Activated naive CD4-positive, alpha-beta T cell treated with anti-CD3 and anti-CD28 coated beads for 36 hours (primary cell): ENCODE measurements at regions of chr3 and their contacts with region 1.

Region 1: GRCh38 chr3:177057768-177058167 is 139.5 kb downstream of the TBL1XR1 start:
- DNase-seq: peak; percentile 84
- H3K4me3 Mint-ChIP-seq: no peak overlapping the region
- H3K27ac Mint-ChIP-seq: no peak overlapping the region
- H3K4me1 Mint-ChIP-seq: peaks cover 32% of the 10 kb centered on the region
- H3K27me3 Mint-ChIP-seq: no peaks in the 10 kb centered on the region

Region 2: GRCh38 chr3:175238801-175239200 is 1819.0 kb before region 1 on chr3:
- CTCF ChIA-PET with region 1: no interaction called
- intact Hi-C with region 1: no loop called
- DNase-seq: no peak
- H3K4me3 Mint-ChIP-seq: no peak overlapping the region
- H3K27ac Mint-ChIP-seq: no peak overlapping the region
- H3K4me1 Mint-ChIP-seq: no peaks in the 10 kb centered on the region
- H3K27me3 Mint-ChIP-seq: no peaks in the 10 kb centered on the region

Region 3: DNA sequence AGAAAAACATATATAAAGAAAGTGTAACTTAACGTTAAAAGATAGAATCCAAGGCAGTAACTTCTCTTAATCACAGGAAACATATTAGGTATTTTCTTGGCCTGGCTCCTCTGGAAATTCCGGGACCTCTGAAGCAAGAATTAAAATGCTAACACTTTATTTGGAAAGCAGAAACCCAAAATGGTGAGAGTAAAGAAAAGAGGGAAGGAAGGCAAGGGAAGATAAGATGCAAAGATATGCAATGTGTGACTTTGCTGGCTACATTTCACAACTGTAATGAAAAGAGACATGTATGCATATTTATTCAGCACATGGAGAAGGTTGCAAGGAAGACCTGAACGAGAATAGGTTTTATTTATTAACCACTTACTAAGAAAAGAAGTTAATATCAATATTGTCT is 233.0 kb before region 1 on chr3:
- CTCF ChIA-PET with region 1: no interaction called
- intact Hi-C with region 1: no loop called
- DNase-seq: no peak
- H3K4me3 Mint-ChIP-seq: no peak overlapping the region
- H3K27ac Mint-ChIP-seq: no peak overlapping the region
- H3K4me1 Mint-ChIP-seq: no peaks in the 10 kb centered on the region
- H3K27me3 Mint-ChIP-seq: peaks cover 5% of the 10 kb centered on the region

Region 4: GRCh38 chr3:177041730-177042551 is 15.8 kb before region 1 on chr3:
- CTCF ChIA-PET with region 1: no interaction called
- intact Hi-C with region 1: no loop called
- DNase-seq: no peak
- H3K4me3 Mint-ChIP-seq: no peak overlapping the region
- H3K27ac Mint-ChIP-seq: no peak overlapping the region
- H3K4me1 Mint-ChIP-seq: peaks cover 21% of the 10 kb centered on the region
- H3K27me3 Mint-ChIP-seq: no peaks in the 10 kb centered on the region

Region 5: GRCh38 chr3:177096615-177097014 is 38.8 kb after region 1 on chr3:
- CTCF ChIA-PET with region 1: no interaction called
- intact Hi-C with region 1: no loop called
- DNase-seq: no peak
- H3K4me3 Mint-ChIP-seq: no peak overlapping the region
- H3K27ac Mint-ChIP-seq: no peak overlapping the region
- H3K4me1 Mint-ChIP-seq: peaks cover 14% of the 10 kb centered on the region
- H3K27me3 Mint-ChIP-seq: no peaks in the 10 kb centered on the region

Region 6: GRCh38 chr3:177109688-177110330 is 52.0 kb after region 1 on chr3:
- CTCF ChIA-PET with region 1: no interaction called
- intact Hi-C with region 1: loop called (anchors 2 kb)
- DNase-seq: no peak
- H3K4me3 Mint-ChIP-seq: no peak overlapping the region
- H3K27ac Mint-ChIP-seq: peak overlapping the region; percentile 46
- H3K4me1 Mint-ChIP-seq: peaks cover 66% of the 10 kb centered on the region
- H3K27me3 Mint-ChIP-seq: no peaks in the 10 kb centered on the region

Region 7: GRCh38 chr3:177150970-177151627 is 93.3 kb after region 1 on chr3:
- CTCF ChIA-PET with region 1: no interaction called
- intact Hi-C with region 1: loop called (anchors 2 kb)
- DNase-seq: peak; percentile 38
- H3K4me3 Mint-ChIP-seq: no peak overlapping the region
- H3K27ac Mint-ChIP-seq: no peak overlapping the region
- H3K4me1 Mint-ChIP-seq: peaks cover 54% of the 10 kb centered on the region
- H3K27me3 Mint-ChIP-seq: no peaks in the 10 kb centered on the region

Region 8: DNA sequence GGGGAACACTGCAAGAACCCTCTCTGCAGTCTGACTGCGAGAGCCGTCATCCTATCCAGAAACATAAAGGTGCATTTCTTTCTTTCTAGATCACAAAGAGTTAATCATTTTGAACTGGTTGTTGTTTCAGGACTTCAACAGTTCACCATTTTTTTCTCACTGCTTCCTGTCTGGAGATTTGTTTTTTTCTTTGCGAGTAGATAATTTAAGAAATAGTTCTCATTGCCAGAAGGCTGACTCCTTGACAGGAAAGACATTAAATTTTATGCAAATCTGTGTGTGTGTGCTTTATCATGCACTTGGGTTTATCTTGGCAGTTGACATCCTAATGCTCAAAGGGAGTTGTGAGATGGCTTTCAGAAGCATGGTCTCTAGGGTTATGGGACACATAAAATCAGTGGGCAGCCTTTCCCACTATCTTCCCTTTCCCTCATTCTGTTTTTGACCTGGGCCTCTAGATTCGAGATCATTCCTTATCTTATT is 263.0 kb after region 1 on chr3:
- CTCF ChIA-PET with region 1: no interaction called
- intact Hi-C with region 1: loop called (anchors 2 kb)
- DNase-seq: no peak
- H3K4me3 Mint-ChIP-seq: no peak overlapping the region
- H3K27ac Mint-ChIP-seq: peak overlapping the region; percentile 65
- H3K4me1 Mint-ChIP-seq: peaks cover 36% of the 10 kb centered on the region
- H3K27me3 Mint-ChIP-seq: no peaks in the 10 kb centered on the region